ENCODE measurements at regions of chr1 and their contacts with region 1.

Region 1: GRCh38 chr1:167220537-167221125 is at the start of gene POU2F1:
- DNase-seq: peak; percentile 94
- H3K4me3 ChIP-seq: peak within 1 kb of the TSS; percentile 99
- H3K27ac ChIP-seq: peak within 1 kb of the TSS; percentile 65
- H3K27me3 ChIP-seq: no peaks in the 10 kb centered on the region
- CTCF ChIP-seq: peak; percentile 59
- polyA plus RNA-seq, gene POU2F1: 2.7 and 2.8 TPM in 2 replicates

Region 2: GRCh38 chr1:167165948-167166689 is 54.5 kb before region 1 on chr1:
- CTCF ChIA-PET with region 1: interaction called, 12 read pairs
- POLR2A ChIA-PET with region 1: no interaction called
- DNase-seq: no peak
- H3K4me3 ChIP-seq: no peak overlapping the region
- H3K27ac ChIP-seq: no peak overlapping the region
- H3K27me3 ChIP-seq: peaks cover 7% of the 10 kb centered on the region
- CTCF ChIP-seq: no peak

Region 3: GRCh38 chr1:167244244-167244643 is 23.6 kb after region 1 on chr1:
- CTCF ChIA-PET with region 1: interaction called, 36 read pairs
- POLR2A ChIA-PET with region 1: no interaction called
- DNase-seq: no peak
- H3K4me3 ChIP-seq: no peak overlapping the region
- H3K27ac ChIP-seq: no peak overlapping the region
- H3K27me3 ChIP-seq: no peaks in the 10 kb centered on the region
- CTCF ChIP-seq: no peak

Region 4: GRCh38 chr1:167297222-167298214 is 76.9 kb after region 1 on chr1:
- CTCF ChIA-PET with region 1: interaction called, 14 read pairs
- POLR2A ChIA-PET with region 1: no interaction called
- DNase-seq: no peak
- H3K4me3 ChIP-seq: no peak overlapping the region
- H3K27ac ChIP-seq: peak overlapping the region; percentile 31
- H3K27me3 ChIP-seq: no peaks in the 10 kb centered on the region
- CTCF ChIP-seq: no peak

Region 5: DNA sequence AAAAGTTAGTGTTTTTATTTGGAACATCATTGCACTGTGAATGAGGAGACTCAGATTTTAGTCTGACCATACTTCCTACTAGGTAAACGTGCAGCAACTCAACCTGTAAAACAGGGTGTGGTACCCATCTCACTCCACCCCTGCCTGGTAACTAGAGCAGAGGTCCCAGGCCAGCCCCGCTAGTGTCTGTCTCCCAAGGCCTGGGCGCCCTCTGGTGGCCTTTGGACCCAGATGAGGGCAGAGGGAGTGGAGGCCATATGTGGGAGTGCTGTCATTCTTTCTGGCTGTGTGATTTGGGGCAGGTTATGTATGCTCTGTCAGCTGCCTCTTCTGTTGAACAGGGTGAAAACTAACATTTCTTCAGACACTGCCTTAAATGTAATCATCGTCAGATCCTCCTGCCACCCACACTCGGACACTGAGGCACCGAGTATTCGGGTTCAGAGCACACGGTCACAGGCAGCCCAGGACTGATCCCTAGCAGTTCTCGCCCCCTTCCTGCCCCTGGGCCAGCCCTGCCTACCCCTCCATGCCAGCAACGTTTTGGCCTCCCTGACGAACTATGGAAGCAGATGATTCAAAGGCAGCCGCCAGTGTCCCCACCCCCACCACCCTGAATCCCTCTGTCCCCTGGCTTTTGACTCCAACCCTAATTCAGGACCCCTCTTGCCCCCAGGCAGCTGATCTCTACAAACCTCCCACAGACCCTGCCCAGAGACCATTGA is 221.7 kb after region 1 on chr1:
- CTCF ChIA-PET with region 1: interaction called, 10 read pairs
- POLR2A ChIA-PET with region 1: no interaction called
- DNase-seq: peak; percentile 23
- H3K4me3 ChIP-seq: no peak overlapping the region
- H3K27ac ChIP-seq: no peak overlapping the region
- H3K27me3 ChIP-seq: peaks cover 19% of the 10 kb centered on the region
- CTCF ChIP-seq: peak; percentile 87

Region 6: DNA sequence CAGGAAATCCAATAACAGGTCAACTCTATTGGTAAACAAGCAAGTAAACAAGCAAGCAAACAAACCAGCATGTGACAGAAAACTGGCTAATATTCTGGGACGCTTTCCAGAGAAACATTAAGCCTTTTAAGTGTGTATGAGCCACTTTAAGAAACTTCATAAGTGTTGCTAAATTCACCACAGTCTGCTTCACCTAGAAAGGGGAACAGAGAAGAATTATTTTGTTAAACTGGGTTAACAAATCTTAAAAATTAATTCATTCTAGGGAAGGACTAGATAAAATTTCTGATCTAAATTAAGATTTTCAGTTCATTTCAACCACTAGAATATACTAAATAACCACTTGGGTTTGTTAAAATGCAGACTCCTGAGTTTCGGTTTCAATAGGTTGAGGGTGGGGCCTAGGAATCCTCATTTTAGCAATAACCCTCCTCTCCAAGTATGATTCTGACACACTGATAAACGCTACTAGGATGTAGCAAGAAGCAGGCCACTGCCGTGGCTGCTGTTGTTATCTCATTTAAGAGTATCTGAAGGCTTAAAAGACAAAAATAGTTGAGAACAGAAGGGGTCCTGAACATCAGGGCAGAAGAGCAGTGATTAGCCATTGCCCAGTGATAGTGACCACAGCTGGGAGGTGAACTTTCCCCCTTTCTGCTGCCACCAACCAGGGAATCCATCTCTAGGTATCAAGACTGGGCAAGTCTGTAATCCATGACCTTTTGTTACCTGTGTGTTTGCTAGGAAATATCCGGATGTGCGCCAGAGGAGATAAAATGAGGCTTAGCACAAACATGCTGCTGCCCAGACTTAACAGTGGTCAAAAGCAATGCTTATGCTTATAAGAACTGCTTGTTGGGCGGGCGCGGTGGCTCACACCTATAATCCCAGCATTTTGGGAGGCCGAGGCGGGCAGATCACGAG is 321.7 kb after region 1 on chr1:
- CTCF ChIA-PET with region 1: interaction called, 25 read pairs
- POLR2A ChIA-PET with region 1: no interaction called
- DNase-seq: no peak
- H3K4me3 ChIP-seq: no peak overlapping the region
- H3K27ac ChIP-seq: no peak overlapping the region
- H3K27me3 ChIP-seq: no peaks in the 10 kb centered on the region
- CTCF ChIP-seq: no peak